Left cardiac atrium (tissue), 4 donors: ENCODE measurements at regions of chr17 and their contacts with region 1.

Region 1: GRCh38 chr17:13337864-13338371 is 263.8 kb downstream of the HS3ST3A1 start:
- DNase-seq: no peak
- ATAC-seq: peak in 1 of 2 donors; percentile 25

Region 2: GRCh38 chr17:13584701-13585080 is 246.8 kb after region 1 on chr17:
- intact Hi-C with region 1: loop called (anchors 10 kb)
- DNase-seq: no peak
- ATAC-seq: no peak

Region 3: DNA sequence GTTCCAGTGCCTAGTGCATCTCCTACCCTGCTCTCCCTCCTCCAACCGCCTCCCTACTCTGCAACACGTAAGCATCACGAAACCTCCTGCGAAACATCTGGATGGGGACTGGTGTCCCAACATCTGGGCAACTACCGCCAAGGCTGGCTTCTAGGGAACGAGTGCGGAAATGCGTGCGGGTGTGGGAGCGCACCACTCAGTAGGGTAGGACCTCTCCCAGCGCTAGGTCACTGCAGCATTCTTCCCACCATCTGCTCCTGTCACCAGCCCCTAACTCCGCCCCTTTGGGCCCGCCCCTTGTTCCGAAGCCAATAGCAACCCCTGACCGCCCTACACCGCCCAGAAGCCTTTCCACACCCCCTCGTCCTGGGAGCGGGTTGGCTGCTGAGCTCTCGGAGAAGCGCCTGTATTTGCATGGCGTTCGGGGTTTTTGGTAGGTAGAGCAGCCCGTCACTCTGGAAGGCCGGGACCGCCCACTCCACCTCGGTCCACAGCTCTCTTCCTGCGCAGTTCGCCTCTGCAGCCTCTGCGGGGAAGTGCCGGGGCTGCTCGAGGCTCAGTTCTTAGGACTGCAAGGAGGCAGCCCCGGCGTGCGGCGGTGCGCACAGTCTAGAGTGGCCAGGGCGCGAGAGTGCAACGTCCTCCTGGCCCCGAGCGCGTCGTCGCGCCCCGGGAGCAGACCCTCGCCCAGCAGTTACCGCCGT is 962.8 kb after region 1 on chr17 and contains the start of gene HS3ST3B1:
- intact Hi-C with region 1: loop called in 1 of 2 experiments (anchors 5 kb)
- DNase-seq: peak; percentile 96
- ATAC-seq: peak; percentile 92 to 94
- total RNA-seq, gene HS3ST3B1: 0.82 to 1.3 TPM

Region 4: GRCh38 chr17:14926526-14927122 is 1588.7 kb after region 1 on chr17:
- intact Hi-C with region 1: loop called in 1 of 2 experiments (anchors 5 kb)
- DNase-seq: peak; percentile 35
- ATAC-seq: no peak